ENCODE measurements at regions of chr19 and their contacts with region 1.

Region 1: DNA sequence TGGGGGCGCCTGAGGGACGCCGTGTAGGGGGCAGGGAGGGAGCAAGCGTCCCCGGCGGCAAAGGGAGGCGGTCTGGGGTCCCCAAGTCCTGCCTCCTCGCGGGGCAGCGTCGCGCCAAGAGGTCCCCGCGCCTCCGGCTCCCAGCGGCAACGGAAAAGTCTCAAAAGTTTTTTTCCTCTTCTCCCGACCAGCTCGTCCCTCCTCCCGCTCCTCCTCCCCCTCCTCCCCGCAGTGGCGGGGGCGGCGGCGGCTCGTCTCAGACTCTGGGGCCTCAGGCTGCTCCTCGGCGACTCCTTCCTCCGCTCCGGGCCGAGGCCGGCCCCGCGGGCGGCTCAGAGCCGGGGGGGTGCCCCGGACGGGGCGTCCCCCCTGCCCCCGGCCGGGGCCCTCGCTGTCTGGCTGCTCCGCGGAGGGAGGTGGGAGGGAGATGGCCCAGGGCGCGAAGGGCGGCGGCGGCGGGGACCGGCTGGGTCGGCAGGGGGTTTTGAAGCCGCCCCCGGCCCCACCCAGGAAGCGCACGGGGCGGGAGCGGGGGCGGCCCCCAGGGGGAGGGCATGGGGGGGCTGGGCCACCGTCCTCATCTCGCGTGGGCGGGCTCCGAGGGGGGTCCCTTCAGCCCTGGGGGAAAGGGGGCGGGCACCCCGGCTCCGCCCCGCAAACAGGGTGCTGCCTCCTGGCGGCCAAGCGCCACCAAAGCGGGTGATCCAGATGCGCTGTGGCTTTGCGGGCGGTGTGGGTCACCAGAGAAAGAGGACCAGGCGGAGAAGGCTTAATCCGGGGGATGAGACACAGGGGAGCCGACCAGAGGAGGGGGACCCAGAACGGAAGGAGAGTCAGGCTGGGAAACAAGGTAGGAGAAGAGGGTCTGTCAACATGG is at the start of gene TGFB1:
- DNase-seq: peak; percentile 94
- ATAC-seq: peak; percentile 77
- total RNA-seq, gene TGFB1: 13.1 TPM

Region 2: GRCh38 chr19:41321600-41322270 is 32.0 kb before region 1 on chr19:
- intact Hi-C with region 1: loop called (anchors 5 kb)
- DNase-seq: peak; percentile 66
- ATAC-seq: no peak

Region 3: GRCh38 chr19:41363753-41364523 is 10.2 kb after region 1 on chr19 and contains the start of gene B9D2:
- intact Hi-C with region 1: no loop called
- DNase-seq: peak; percentile 99
- ATAC-seq: peak; percentile 97
- total RNA-seq, gene B9D2: 2.6 TPM

Region 4: DNA sequence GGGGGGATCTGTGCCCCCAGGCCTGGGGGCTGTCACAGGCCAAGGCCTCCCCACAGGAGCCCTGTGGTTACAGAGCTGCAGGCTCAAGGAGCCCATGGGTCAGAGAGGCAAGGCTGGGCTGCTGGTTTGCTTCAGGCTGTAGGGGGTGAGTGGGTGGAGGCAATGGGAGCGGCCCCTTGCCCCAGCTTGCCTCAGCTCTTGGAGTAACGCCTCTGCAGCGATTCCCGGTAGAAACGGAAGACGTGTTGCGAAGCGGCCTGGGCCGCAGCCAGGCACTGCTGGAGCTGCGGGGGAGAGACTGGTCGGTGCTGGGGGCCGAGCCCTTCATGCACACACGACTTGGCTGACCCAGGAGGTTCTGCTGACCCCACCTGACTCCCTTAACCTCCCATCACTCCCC is 32.7 kb after region 1 on chr19:
- intact Hi-C with region 1: no loop called
- DNase-seq: peak; percentile 54
- ATAC-seq: peak; percentile 57

Region 5: GRCh38 chr19:41500443-41500842 is 146.7 kb after region 1 on chr19:
- intact Hi-C with region 1: no loop called
- DNase-seq: no peak
- ATAC-seq: no peak